ENCODE measurements at regions of chr9 and their contacts with region 1.

Region 1: GRCh38 chr9:32571969-32572899 is 725 bp downstream of the NDUFB6 start:
- DNase-seq: peak; percentile 76
- H3K4me3 ChIP-seq: peak overlapping the region; percentile 78 to 84 (median 84)
- H3K27ac ChIP-seq: peak overlapping the region; percentile 69
- H3K4me1 ChIP-seq: peaks cover 6% of the 10 kb centered on the region
- H3K27me3 ChIP-seq: no peaks in the 10 kb centered on the region
- CTCF ChIP-seq: peak; percentile 78 to 86

Region 2: DNA sequence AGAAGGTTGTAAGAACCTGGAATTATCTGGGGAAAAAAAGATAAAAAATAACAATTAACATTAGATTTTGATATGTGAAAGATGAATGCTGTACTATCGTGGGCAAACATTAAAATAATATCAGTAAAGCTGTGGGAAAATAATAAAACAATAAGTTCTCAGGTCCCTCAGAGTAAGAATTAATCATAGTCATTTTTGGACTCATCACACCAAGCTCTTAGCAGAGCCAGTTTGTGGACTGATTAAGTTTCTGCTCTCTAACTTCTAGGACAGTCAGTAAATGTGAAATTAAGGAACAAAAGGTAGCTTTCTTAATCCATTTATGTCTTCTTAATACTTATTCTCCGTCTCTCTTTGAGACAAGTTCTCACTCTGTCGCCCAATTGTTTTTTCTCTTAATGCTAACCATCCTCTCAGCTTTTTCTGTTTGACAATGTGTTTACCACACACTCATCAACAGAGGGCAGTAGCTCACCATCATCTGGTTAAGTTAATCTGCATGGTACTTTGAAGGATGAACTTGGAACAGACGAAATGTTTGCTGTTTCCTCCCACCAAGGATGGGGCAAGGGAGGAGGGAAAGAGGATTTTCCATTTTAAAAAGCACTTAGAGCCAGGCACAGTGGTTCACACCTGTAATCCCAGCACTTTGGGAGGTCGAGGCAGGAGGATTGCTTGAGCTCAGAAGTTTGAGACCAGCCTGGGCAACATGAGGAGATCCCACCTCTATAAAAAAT is 193.1 kb before region 1 on chr9:
- CTCF ChIA-PET with region 1: interaction called, 36 read pairs
- dilution Hi-C with region 1: no loop called
- in situ Hi-C with region 1: loop called (anchors 5 kb)
- intact Hi-C with region 1: loop called (anchors 1 kb)
- DNase-seq: peak; percentile 68
- H3K4me3 ChIP-seq: no peak overlapping the region
- H3K27ac ChIP-seq: no peak overlapping the region
- H3K4me1 ChIP-seq: peaks cover 7% of the 10 kb centered on the region
- H3K27me3 ChIP-seq: no peaks in the 10 kb centered on the region
- CTCF ChIP-seq: peak; percentile 82 to 85

Region 3: GRCh38 chr9:32431940-32432555 is 140.2 kb before region 1 on chr9:
- CTCF ChIA-PET with region 1: no interaction called
- dilution Hi-C with region 1: loop called (anchors 25 kb)
- in situ Hi-C with region 1: no loop called
- intact Hi-C with region 1: loop called (anchors 1 kb)
- DNase-seq: peak; percentile 4
- H3K4me3 ChIP-seq: no peak overlapping the region
- H3K27ac ChIP-seq: no peak overlapping the region
- H3K4me1 ChIP-seq: peaks cover 5% of the 10 kb centered on the region
- H3K27me3 ChIP-seq: no peaks in the 10 kb centered on the region
- CTCF ChIP-seq: peak; percentile 18 to 46

Region 4: GRCh38 chr9:32533336-32533735 is 38.9 kb before region 1 on chr9:
- CTCF ChIA-PET with region 1: no interaction called
- dilution Hi-C with region 1: no loop called
- in situ Hi-C with region 1: no loop called
- intact Hi-C with region 1: loop called (anchors 2 kb)
- DNase-seq: no peak
- H3K4me3 ChIP-seq: no peak overlapping the region
- H3K27ac ChIP-seq: no peak overlapping the region
- H3K4me1 ChIP-seq: peaks cover 9% of the 10 kb centered on the region
- H3K27me3 ChIP-seq: no peaks in the 10 kb centered on the region
- CTCF ChIP-seq: no peak

Region 5: DNA sequence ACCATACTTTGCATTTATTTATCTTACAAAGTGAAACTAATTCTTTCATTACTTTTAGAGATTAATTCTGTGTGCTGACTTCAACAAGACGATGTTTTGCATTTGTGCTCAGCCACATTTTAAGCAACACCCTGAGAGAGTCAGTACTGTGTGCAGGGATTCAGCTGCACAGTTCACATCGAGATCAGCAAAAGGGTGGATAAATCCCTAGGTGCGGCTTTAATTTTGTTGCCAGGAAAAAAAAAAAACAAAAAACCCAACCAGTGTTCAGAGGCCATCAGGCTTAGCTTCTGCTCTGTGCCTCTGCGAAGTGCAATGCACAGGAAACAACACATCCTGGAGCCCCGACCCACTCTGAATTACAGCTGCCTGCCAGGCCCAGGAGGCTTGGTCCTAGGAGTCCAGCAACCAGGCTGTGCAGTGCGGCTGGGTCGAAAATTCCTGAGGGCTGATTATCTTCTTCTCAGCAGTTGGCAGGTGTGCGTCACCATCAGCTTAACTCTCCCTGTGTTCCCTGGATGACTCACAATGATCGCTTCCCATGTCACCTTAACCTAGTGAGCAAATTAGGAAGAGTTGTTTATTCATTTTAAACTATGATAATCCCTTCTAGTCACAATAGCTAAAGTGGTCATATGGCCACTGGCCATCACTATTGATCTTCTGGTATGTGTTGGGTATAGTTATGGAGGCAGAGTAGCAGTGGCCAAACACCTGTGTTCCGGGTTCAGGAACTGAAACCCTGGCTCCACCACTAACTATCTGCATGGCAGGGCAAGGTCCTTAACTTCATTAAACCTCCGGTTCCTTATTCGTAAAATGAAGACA is 31.9 kb after region 1 on chr9:
- CTCF ChIA-PET with region 1: no interaction called
- dilution Hi-C with region 1: no loop called
- in situ Hi-C with region 1: no loop called
- intact Hi-C with region 1: no loop called
- DNase-seq: peak; percentile 88
- H3K4me3 ChIP-seq: no peak overlapping the region
- H3K27ac ChIP-seq: no peak overlapping the region
- H3K4me1 ChIP-seq: no peaks in the 10 kb centered on the region
- H3K27me3 ChIP-seq: no peaks in the 10 kb centered on the region
- CTCF ChIP-seq: no peak

Region 6: GRCh38 chr9:32618261-32618660 is 46.0 kb after region 1 on chr9:
- CTCF ChIA-PET with region 1: no interaction called
- dilution Hi-C with region 1: no loop called
- in situ Hi-C with region 1: no loop called
- intact Hi-C with region 1: no loop called
- DNase-seq: no peak
- H3K4me3 ChIP-seq: no peak overlapping the region
- H3K27ac ChIP-seq: no peak overlapping the region
- H3K4me1 ChIP-seq: no peaks in the 10 kb centered on the region
- H3K27me3 ChIP-seq: no peaks in the 10 kb centered on the region
- CTCF ChIP-seq: no peak

Region 7: DNA sequence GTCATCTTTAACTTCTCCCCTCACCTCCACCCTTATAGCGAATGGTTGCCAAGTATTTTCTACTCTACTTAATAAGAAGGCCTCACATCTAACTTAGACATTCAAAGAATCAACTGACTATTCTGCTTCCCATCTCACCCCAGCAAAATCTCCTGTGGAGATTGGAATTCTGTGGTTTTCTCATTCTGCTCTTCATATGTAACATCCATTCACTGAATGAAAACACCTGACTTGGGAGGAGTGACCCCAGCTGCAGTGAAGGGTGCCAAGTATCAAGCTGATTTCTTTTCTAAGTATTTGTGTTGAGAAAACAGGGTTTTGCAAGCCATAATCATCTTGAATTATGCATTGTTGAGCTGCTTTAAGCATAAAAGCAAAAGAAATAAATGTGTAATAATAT is 105.7 kb after region 1 on chr9:
- CTCF ChIA-PET with region 1: no interaction called
- dilution Hi-C with region 1: no loop called
- in situ Hi-C with region 1: no loop called
- intact Hi-C with region 1: no loop called
- DNase-seq: no peak
- H3K4me3 ChIP-seq: no peak overlapping the region
- H3K27ac ChIP-seq: no peak overlapping the region
- H3K4me1 ChIP-seq: no peaks in the 10 kb centered on the region
- H3K27me3 ChIP-seq: no peaks in the 10 kb centered on the region
- CTCF ChIP-seq: no peak

Region 8: DNA sequence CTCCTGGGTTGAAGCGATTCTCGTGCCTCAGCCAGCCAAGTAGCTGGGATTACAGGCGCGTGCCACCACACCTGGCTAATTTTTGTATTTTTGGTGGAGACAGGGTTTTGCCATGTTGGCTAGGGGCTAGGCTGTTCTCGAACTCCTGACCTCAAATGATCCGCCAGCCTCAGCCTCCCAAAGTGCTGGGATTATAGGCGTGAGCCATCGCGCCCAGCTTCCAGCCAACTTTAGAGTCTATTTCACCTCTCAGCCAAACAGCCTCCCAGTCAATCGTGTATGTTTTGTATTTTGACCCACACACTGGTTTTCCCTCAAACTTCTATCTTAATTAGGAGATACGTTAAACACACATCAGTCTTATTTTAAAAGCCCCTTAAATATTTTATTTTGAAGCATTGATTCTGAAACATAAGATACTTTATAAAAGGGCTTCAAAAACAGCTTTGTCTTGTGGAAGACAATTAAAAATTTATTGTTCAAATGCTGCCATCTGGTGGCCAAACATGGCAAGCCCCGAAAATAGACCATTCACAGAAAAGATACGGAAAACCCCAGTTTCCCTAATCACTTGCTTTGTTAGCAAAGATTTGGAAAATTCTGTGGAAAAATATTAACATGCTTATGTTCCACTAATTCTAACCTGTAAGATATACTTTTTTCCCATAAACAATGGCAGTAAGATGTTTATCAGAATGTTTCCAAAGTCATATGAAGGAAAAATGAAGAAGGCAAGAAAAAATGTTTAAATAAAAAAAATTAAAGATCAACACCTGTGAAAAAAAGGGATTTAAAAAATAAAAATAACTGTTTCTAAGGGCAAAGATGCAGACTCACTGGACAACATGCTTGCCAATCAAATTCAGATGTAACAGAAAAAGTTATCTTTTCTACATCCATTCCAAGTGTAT is 396.1 kb after region 1 on chr9:
- CTCF ChIA-PET with region 1: no interaction called
- dilution Hi-C with region 1: loop called (anchors 25 kb)
- in situ Hi-C with region 1: loop called in 1 of 2 experiments (anchors 10 kb)
- intact Hi-C with region 1: no loop called
- DNase-seq: peak; percentile 19
- H3K4me3 ChIP-seq: no peak overlapping the region
- H3K27ac ChIP-seq: no peak overlapping the region
- H3K4me1 ChIP-seq: no peaks in the 10 kb centered on the region
- H3K27me3 ChIP-seq: no peaks in the 10 kb centered on the region
- CTCF ChIP-seq: peak; percentile 77 to 79

Measured in mammary epithelial cell (primary cell).